HepG2 (cell line): ENCODE measurements at regions of chr4 and their contacts with region 1.

Region 1: DNA sequence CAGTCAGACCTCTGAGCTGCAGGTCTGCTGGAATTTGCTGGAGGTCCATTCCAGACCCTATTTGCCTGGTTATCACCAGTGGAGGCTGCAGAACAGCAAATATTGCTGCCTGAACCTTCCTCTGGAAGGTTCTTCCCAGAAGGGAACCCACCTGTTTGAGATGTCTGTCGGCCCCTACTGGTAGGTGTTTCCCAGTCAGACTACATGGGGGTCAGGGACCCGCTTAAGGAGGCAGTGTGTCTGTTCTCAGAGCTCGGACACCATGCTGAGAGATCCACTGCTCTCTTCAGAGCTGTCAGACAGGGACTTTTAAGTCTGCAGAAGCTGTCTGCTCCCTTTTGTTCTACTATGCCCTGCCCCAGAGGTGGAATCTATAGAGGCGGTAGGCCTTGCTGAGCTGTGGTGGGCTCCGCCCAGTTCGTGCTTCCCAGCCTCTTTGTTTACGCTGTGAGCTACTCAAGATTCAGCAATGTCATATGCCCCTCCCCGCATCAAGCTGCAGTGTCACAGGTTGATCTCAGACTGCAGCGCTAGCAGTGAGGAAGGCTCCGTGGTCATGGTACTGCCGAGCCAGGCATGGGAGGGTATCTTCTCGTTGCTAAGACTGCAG is 44.1 kb upstream of the KDR start:
- DNase-seq: peak; percentile 18
- ATAC-seq: peak; percentile 43; the same call in 2 of the 3 replicates
- H3K4me3 ChIP-seq: no peak overlapping the region
- H3K27ac ChIP-seq: no peak overlapping the region
- H3K4me1 ChIP-seq: no peaks in the 10 kb centered on the region
- H3K27me3 ChIP-seq: no peaks in the 10 kb centered on the region
- CTCF ChIP-seq: no peak
- EP300 ChIP-seq: no peak
- POLR2A ChIP-seq: no peak
- RAD21 ChIP-seq: no peak

Region 2: DNA sequence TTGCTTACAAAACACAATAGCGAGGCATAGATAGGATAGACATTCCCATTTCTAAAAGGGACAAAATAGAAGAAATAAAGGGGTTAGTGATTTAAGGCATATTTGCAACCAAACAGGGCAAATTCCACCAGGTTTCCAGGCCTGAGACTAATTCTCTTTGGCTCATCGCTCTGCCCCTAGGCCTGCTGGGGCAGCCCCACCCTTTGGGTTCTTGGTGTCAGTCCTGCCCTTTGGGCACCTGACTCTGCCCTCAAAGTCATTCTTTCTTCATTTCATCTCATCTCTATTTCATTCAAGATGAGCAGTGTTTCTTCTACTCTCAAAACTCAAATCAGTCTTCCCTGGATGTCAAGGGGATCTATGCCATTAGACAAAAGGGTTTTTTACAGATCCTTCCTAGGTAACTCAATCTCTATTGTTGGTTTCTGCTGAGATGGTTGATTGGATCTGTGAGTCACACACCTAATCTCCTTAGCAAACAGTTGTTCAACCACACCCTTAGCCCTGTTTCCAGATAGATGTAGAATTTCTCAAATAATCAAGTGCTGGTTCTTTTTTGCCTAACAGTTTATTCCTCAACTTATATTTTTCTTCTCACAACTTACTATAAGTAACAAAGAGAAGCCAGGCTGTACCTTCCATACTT is 244.7 kb before region 1 on chr4:
- CTCF ChIA-PET with region 1: no interaction called
- POLR2A ChIA-PET with region 1: no interaction called
- in situ Hi-C with region 1: no loop called
- intact Hi-C with region 1: no loop called
- DNase-seq: no peak
- ATAC-seq: no peak
- H3K4me3 ChIP-seq: no peak overlapping the region
- H3K27ac ChIP-seq: no peak overlapping the region
- H3K4me1 ChIP-seq: no peaks in the 10 kb centered on the region
- H3K27me3 ChIP-seq: no peaks in the 10 kb centered on the region
- CTCF ChIP-seq: no peak
- EP300 ChIP-seq: no peak
- POLR2A ChIP-seq: no peak
- RAD21 ChIP-seq: no peak

Region 3: GRCh38 chr4:54971474-54971950 is 197.9 kb before region 1 on chr4:
- CTCF ChIA-PET with region 1: no interaction called
- POLR2A ChIA-PET with region 1: no interaction called
- in situ Hi-C with region 1: no loop called
- intact Hi-C with region 1: loop called (anchors 10 kb)
- DNase-seq: peak; percentile 18
- ATAC-seq: peak; percentile 93
- H3K4me3 ChIP-seq: no peak overlapping the region
- H3K27ac ChIP-seq: no peak overlapping the region
- H3K4me1 ChIP-seq: no peaks in the 10 kb centered on the region
- H3K27me3 ChIP-seq: no peaks in the 10 kb centered on the region
- CTCF ChIP-seq: peak; percentile 68
- EP300 ChIP-seq: no peak
- POLR2A ChIP-seq: no peak
- RAD21 ChIP-seq: 0 out of 2 replicates have a peak, but pooled peaks have one; percentile 26

Region 4: DNA sequence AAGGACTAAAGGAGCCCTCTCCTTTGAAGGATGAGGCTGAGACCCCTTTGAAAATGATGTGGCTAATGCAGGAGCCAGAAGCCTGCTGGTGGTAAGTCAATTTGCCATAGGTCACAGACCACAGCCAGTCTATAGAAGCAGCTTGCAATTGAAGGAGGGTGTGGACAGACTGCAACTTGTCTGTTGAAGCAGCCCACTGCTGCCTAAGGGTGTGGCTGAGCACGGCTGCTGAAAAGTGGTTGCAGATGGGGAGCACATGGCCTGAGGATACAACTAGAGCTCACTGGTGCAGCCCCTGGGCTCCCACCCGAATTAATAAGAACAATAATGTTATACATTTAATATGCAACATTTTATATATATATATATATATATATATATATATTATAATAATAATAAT is 638.7 kb after region 1 on chr4:
- CTCF ChIA-PET with region 1: no interaction called
- POLR2A ChIA-PET with region 1: no interaction called
- in situ Hi-C with region 1: no loop called
- intact Hi-C with region 1: no loop called
- DNase-seq: no peak
- ATAC-seq: no peak
- H3K4me3 ChIP-seq: no peak overlapping the region
- H3K27ac ChIP-seq: no peak overlapping the region
- H3K4me1 ChIP-seq: no peaks in the 10 kb centered on the region
- H3K27me3 ChIP-seq: peaks cover 0 to 3% of the 10 kb centered on the region in 2 experiments; a peak in 2 of 5 replicates
- CTCF ChIP-seq: no peak
- EP300 ChIP-seq: no peak
- POLR2A ChIP-seq: no peak
- RAD21 ChIP-seq: no peak